Mucosa of descending colon (tissue), 3 donors: ENCODE measurements at regions of chr1 and their contacts with region 1.

Region 1: GRCh38 chr1:50929376-50929958 is 30.6 kb downstream of the FAF1 start:
- DNase-seq: no peak
- ATAC-seq: peak; percentile 25
- H3K4me3 ChIP-seq: no peak overlapping the region
- H3K4me1 ChIP-seq: no peaks in the 10 kb centered on the region
- CTCF ChIP-seq: peak; percentile 27

Region 2: GRCh38 chr1:50368179-50369012 is 561.1 kb before region 1 on chr1:
- intact Hi-C with region 1: no loop called
- DNase-seq: peak in 2 of 3 donors; percentile 54 to 61
- ATAC-seq: peak; percentile 78
- H3K4me3 ChIP-seq: no peak overlapping the region
- H3K4me1 ChIP-seq: no peaks in the 10 kb centered on the region
- CTCF ChIP-seq: peak; percentile 35

Region 3: GRCh38 chr1:50658459-50659076 is 270.9 kb before region 1 on chr1:
- intact Hi-C with region 1: no loop called
- DNase-seq: no peak
- ATAC-seq: no peak
- H3K4me3 ChIP-seq: no peak overlapping the region
- H3K4me1 ChIP-seq: no peaks in the 10 kb centered on the region
- CTCF ChIP-seq: no peak

Region 4: GRCh38 chr1:51044834-51045233 is 115.4 kb after region 1 on chr1:
- intact Hi-C with region 1: loop called in 1 of 2 experiments (anchors 10 kb)
- DNase-seq: no peak
- ATAC-seq: no peak
- H3K4me3 ChIP-seq: no peak overlapping the region
- H3K4me1 ChIP-seq: no peaks in the 10 kb centered on the region
- CTCF ChIP-seq: no peak

Region 5: GRCh38 chr1:51189421-51190073 is 260.1 kb after region 1 on chr1:
- intact Hi-C with region 1: loop called in 1 of 2 experiments (anchors 5 kb)
- DNase-seq: peak in 1 of 3 donors; percentile 45
- ATAC-seq: peak; percentile 72
- H3K4me3 ChIP-seq: no peak overlapping the region
- H3K4me1 ChIP-seq: no peaks in the 10 kb centered on the region
- CTCF ChIP-seq: peak; percentile 70